ENCODE measurements at regions of chr5 and their contacts with region 1.

Region 1: GRCh38 chr5:68196876-68197275 is 18.7 kb upstream of the PIK3R1 start:
- DNase-seq: no peak
- ATAC-seq: no peak
- H3K4me3 ChIP-seq: no peak overlapping the region
- H3K27ac ChIP-seq: no peak overlapping the region
- H3K4me1 ChIP-seq: no peaks in the 10 kb centered on the region
- H3K27me3 ChIP-seq: no peaks in the 10 kb centered on the region
- CTCF ChIP-seq: no peak

Region 2: GRCh38 chr5:67842806-67843205 is 354.1 kb before region 1 on chr5:
- CTCF ChIA-PET with region 1: no interaction called
- POLR2A ChIA-PET with region 1: interaction called, 10 read pairs
- in situ Hi-C with region 1: no loop called
- intact Hi-C with region 1: no loop called
- DNase-seq: no peak
- ATAC-seq: no peak
- H3K4me3 ChIP-seq: no peak overlapping the region
- H3K27ac ChIP-seq: no peak overlapping the region
- H3K4me1 ChIP-seq: no peaks in the 10 kb centered on the region
- H3K27me3 ChIP-seq: no peaks in the 10 kb centered on the region
- CTCF ChIP-seq: no peak; the same call in 1 of the 2 replicates

Region 3: DNA sequence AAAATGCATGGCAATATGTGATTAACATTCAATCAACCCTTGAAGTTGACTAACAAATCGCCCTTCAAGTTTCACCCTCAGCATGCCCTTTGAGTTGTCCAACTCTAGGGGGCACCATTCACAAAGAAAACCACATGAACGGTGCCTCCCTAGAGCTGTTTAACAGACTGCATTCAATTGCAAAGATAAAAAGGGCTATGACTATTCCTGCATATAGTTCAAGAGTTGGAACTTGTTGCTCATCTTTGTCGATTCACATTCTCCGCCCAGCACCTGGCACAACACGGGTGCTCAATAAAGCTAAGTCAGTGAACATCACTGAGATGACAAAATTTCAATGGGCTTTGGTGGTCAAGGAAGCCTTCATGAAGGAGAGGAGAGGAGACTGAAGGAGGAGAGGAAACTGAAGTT is 827.4 kb after region 1 on chr5:
- CTCF ChIA-PET with region 1: no interaction called
- POLR2A ChIA-PET with region 1: no interaction called
- in situ Hi-C with region 1: no loop called
- intact Hi-C with region 1: no loop called
- DNase-seq: no peak
- ATAC-seq: peak; percentile 72; the same call in 1 of the 2 replicates
- H3K4me3 ChIP-seq: no peak overlapping the region
- H3K27ac ChIP-seq: no peak overlapping the region
- H3K4me1 ChIP-seq: no peaks in the 10 kb centered on the region
- H3K27me3 ChIP-seq: peaks cover 24% of the 10 kb centered on the region
- CTCF ChIP-seq: peak; percentile 74

Measured in Panc1 (cell line).